Activated B cell treated with CpG ODN at 0.5 μM for 24 hours (primary cell): ENCODE measurements at regions of chr20 and their contacts with region 1.

Region 1: DNA sequence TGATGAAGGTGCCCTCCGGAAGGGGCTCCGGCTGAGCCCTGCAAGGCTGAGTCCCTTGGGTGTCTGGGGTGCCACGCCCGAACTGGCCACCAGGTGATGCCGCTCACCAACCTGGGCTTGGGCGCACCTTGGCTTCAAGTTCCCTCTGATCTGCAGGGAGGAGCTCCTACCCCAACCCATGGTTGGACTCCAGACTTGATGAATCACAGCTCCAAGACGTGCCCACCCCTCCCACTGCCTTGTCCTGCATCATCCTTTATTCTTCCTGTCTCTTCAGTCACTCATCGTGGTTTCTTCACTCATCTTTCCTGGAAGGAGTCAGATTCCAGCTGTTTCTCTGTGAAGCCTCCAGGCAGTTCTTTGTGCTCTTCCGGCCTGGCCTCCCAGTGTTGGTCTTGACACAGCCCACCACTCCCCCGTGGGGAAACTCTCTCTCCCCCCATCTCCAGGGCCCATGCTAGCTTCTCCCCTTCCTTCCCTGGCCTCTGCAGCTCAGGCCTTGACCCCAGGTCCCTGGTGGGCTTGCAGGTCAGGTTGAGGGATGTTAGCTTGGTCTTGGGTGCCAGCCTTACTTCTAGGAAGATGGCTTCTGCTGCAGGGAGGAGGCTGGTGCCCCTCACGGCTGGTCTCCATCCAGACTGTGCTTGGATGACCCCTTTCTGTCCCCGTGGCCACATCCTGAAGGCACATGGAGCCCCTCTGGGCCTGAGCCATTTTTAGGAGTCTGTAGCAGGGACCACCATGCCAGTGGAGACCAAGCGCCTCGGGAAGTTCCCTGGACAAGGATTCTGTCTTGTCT is 2.6 kb upstream of the ZBP1 start:
- DNase-seq: peak; percentile 47
- ATAC-seq: no peak
- H3K4me3 Mint-ChIP-seq: no peak overlapping the region
- H3K27ac Mint-ChIP-seq: peak overlapping the region; percentile 31
- H3K4me1 Mint-ChIP-seq: peaks cover 66% of the 10 kb centered on the region
- H3K27me3 Mint-ChIP-seq: no peaks in the 10 kb centered on the region
- CTCF ChIP-seq: peak; percentile 57

Region 2: GRCh38 chr20:57398231-57398821 is 224.5 kb before region 1 on chr20:
- CTCF ChIA-PET with region 1: interaction called, 3 read pairs
- POLR2A ChIA-PET with region 1: interaction called, 36 read pairs
- intact Hi-C with region 1: loop called (anchors 1 kb)
- DNase-seq: peak; percentile 78
- ATAC-seq: peak; percentile 64
- H3K4me3 Mint-ChIP-seq: peak overlapping the region; percentile 78
- H3K27ac Mint-ChIP-seq: peak overlapping the region; percentile 97
- H3K4me1 Mint-ChIP-seq: peaks cover 100% of the 10 kb centered on the region
- H3K27me3 Mint-ChIP-seq: no peaks in the 10 kb centered on the region
- CTCF ChIP-seq: no peak

Region 3: DNA sequence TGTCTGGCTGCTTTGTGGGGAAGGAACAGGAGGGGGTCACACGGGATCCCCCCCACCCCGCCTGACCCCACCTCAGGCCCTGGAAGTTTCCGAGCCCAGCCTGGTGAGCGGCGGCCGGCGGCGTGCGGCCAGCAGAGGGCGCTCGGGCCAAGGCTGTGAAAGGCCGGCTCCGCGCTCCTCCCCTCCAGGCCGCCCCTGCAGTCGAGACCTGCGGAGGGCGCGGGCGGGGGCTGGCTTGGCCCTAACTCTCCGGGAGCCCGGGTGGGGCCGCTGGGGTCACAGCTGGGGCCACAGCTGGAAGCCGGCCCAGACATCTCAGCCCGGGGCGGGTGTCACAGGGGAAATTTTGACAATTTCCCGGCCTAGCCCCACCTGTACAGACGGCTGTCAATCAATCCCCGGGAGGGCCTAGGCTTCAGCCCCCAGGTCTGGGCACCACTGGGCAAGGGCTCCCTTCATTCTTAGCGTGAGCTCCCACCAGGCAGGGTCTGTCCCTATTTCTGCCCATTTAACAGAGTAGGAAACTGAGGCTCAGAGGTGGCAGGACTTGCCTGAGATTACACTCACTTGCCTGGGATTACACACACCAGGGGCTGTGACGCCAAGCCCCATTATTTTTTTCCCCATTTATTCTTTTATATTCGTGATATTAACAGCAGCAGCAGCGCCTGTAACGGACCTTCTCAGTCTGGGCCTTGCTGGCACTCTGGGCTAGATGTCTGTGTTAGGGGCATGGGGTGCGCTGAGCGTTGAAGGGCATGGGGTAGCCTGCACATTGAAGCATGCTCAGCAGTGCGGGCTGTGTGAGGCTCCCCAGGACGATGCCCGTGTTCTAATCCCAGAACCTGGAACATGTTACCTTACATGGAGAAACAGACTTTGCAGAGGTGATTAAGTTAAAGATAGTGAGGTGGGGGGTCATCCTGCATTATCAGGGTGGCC is 25.5 kb before region 1 on chr20:
- CTCF ChIA-PET with region 1: interaction called, 23 read pairs
- POLR2A ChIA-PET with region 1: interaction called, 22 read pairs
- intact Hi-C with region 1: loop called (anchors 1 kb)
- DNase-seq: peak; percentile 82
- ATAC-seq: peak; percentile 85
- H3K4me3 Mint-ChIP-seq: peak overlapping the region; percentile 42
- H3K27ac Mint-ChIP-seq: no peak overlapping the region
- H3K4me1 Mint-ChIP-seq: peaks cover 25% of the 10 kb centered on the region
- H3K27me3 Mint-ChIP-seq: peaks cover 18% of the 10 kb centered on the region
- CTCF ChIP-seq: peak; percentile 35

Region 4: DNA sequence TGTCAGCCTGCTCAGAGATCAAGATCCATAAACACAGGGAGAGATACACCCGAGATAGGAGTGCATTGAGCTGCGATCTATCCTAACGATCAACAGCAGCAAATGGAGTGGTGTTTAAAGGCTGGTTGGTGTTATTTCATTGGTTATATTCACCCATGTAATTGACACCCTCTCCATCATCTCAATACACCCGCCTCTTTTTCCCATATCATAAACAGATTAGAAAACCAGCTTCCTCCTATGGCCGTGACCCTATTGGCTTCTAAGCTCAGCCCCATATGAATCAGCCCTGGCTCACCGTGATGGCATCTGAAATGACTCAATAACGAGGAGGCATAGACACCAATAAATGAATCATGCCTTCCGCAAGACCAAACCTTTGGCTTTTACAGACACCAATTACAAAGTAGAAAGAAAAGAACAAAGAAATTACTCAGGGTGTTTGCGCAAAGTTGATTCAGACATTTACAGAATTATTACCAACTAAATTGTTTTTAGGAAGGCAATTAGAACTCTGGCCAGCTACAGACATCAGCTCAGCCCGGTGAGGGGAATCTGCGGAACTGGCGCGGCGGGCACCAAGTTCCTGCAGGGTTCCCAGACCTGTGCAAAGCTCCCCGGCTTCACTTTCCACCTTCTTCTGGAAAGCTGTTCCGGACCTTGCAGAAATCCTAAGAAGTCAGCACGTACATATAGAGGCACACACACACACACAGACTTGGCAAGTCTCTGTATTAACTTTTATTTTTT is 75.5 kb after region 1 on chr20:
- CTCF ChIA-PET with region 1: interaction called, 4 read pairs
- POLR2A ChIA-PET with region 1: interaction called, 24 read pairs
- intact Hi-C with region 1: no loop called
- DNase-seq: no peak
- ATAC-seq: peak; percentile 35
- H3K4me3 Mint-ChIP-seq: peak overlapping the region; percentile 76
- H3K27ac Mint-ChIP-seq: peak overlapping the region; percentile 92
- H3K4me1 Mint-ChIP-seq: peaks cover 97% of the 10 kb centered on the region
- H3K27me3 Mint-ChIP-seq: no peaks in the 10 kb centered on the region
- CTCF ChIP-seq: no peak

Region 5: DNA sequence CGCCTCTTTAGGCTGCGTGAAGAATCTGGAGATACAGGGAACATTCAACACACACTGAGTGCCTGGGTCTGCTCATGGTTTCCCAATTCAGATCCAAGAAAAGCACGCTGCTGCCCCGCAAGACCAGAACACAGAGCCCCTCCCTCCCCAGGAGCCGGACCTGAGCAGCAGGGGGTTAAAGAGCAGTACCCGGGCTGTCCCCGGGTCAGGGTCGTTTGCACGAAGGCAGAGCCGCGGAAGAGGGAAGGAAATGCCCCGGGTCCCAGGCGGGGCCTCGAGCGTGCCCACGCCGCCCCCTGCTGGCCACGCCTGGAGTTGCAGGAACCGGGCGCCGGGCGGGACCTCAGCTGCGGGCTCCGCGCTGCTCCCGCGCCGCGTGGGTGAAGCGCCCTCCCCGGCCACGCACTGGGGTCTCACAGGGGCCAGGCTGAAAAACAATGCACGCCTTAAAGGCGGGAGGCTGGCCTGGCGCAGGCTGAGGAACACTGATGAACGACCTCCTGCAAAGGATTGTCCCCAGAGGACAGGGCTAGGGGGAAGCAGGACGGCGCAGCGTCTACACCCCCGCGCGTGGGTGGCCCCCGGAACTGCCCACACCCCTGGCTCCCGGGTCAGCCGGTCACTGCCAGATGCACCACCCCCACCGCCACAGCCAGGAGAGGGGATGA is 556.8 kb after region 1 on chr20:
- CTCF ChIA-PET with region 1: interaction called, 12 read pairs
- POLR2A ChIA-PET with region 1: no interaction called
- intact Hi-C with region 1: loop called (anchors 1 kb)
- DNase-seq: peak; percentile 75
- ATAC-seq: peak; percentile 96
- H3K4me3 Mint-ChIP-seq: no peak overlapping the region
- H3K27ac Mint-ChIP-seq: no peak overlapping the region
- H3K4me1 Mint-ChIP-seq: peaks cover 9% of the 10 kb centered on the region
- H3K27me3 Mint-ChIP-seq: peaks cover 36% of the 10 kb centered on the region
- CTCF ChIP-seq: peak; percentile 94

Region 6: DNA sequence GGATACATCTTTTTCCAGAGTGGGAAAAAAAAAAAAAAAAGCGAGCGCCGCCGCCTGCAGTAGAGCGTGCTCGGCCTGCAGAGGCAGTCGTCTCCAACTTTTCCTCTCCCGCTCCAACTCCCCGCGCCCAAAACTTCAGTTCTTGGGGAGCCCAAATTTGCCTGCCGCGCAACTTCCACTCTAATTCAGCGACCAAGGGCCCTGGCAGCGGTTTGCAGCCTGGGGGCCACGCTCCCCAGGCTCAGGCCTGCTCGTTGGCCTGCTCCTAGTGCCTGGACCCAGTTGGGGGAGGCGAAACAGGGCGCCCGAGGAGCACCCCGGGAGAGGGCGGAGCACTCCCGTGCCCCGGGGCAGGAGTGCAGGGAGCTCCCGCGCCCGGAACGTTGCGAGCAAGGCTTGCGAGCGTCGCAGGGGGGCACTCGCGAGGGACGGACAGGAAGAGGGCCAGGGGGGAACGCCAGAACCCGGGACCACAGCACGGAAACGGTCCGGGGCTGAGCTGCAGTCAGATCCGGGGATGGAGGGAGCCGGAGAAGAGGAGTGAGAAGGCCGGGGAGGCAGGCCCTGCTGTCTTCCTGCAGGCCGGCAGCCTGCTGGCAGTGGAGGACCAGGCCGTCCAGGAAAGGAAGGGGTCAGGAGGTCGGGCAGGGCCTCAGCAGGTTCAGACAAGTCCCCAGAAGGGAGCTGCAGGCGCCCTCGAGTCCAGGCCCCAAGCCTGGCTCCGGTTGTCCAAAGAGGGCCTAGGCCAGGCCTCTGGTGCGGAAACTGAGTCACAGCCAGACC is 1028.2 kb after region 1 on chr20 and contains the start of gene STX16:
- CTCF ChIA-PET with region 1: no interaction called
- POLR2A ChIA-PET with region 1: interaction called, 13 read pairs
- intact Hi-C with region 1: loop called (anchors 1 kb)
- DNase-seq: peak; percentile 79
- ATAC-seq: peak; percentile 82
- H3K4me3 Mint-ChIP-seq: peak within 1 kb of the TSS; percentile 97
- H3K27ac Mint-ChIP-seq: peak within 1 kb of the TSS; percentile 93
- H3K4me1 Mint-ChIP-seq: peaks cover 20% of the 10 kb centered on the region
- H3K27me3 Mint-ChIP-seq: no peaks in the 10 kb centered on the region
- CTCF ChIP-seq: no peak
- total RNA-seq, gene STX16: 71.4 and 77.4 TPM in 2 replicates

Region 7: DNA sequence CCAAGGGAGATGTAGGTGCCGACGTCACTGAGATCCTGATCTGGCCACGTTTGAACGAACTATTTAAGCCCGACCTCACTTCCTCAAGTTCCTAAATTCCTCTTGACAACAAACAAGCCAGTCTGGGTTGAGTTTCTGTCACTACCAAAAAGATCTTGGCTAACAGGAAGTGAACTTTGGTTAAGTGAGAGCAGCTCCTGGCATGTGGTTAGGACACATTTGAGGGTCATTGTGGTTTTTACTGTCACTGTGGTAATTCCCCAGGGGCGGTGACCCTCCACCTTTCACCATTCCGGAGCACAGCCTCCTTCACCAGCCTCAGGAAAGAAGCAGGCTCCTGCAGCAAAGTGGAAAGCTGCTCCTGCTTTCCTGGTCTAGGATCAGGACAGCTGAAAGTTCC is 1497.7 kb after region 1 on chr20:
- CTCF ChIA-PET with region 1: no interaction called
- POLR2A ChIA-PET with region 1: no interaction called
- intact Hi-C with region 1: loop called (anchors 10 kb)
- DNase-seq: no peak
- ATAC-seq: no peak
- H3K4me3 Mint-ChIP-seq: peak overlapping the region; percentile 54
- H3K27ac Mint-ChIP-seq: peak overlapping the region; percentile 99
- H3K4me1 Mint-ChIP-seq: peaks cover 68% of the 10 kb centered on the region
- H3K27me3 Mint-ChIP-seq: no peaks in the 10 kb centered on the region
- CTCF ChIP-seq: no peak